Activated CD4-positive, alpha-beta T cell treated with anti-CD3 and anti-CD28 coated beads for 36 hours (primary cell): ENCODE measurements at regions of chr11 and their contacts with region 1.

Region 1: DNA sequence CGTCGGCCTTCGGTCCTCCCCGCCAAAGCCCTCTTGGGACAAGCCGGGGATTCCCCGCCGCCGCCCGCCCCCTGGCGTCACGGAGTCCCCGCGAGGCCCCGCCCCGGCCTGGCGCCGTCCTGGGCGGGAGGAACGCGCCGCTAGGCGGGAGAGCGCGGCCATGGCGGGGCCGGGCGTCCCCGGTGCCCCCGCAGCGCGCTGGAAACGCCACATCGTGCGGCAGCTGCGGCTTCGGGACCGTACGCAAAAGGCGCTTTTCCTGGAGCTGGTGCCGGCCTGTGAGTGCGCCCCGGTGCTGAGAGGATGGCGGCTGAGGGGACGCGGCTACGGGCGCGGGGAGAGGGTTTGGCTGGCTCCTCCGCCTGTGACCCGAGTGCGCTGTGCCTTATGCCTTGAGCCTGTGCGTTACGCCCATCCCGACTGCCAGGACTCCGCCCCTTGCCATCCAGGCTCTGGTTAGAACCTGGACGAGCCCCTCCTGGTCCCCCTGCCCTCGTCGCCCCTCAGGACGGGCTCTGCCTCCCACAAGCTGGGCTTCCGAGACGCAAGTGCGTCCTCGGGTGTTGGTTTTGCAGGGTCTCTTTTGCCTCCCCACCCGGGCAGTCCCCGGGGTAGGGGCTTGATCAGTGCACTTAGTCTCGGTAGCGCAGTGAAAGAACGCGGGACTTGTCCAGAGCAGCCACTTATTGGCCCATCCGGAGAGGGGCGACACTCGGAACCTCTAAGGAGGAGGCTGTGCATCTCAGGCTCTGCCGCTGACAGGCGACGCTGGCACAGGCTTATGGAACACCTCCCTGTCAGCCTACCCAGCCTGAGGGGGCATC is at the start of gene ATG16L2:
- DNase-seq: peak; percentile 94
- ATAC-seq: peak; percentile 65
- H3K4me3 Mint-ChIP-seq: peak within 1 kb of the TSS; percentile 91
- H3K27ac Mint-ChIP-seq: peak within 1 kb of the TSS; percentile 98
- H3K4me1 Mint-ChIP-seq: peaks cover 30% of the 10 kb centered on the region
- H3K27me3 Mint-ChIP-seq: no peaks in the 10 kb centered on the region
- total RNA-seq, gene ATG16L2: 55.3 to 59.4 TPM

Region 2: DNA sequence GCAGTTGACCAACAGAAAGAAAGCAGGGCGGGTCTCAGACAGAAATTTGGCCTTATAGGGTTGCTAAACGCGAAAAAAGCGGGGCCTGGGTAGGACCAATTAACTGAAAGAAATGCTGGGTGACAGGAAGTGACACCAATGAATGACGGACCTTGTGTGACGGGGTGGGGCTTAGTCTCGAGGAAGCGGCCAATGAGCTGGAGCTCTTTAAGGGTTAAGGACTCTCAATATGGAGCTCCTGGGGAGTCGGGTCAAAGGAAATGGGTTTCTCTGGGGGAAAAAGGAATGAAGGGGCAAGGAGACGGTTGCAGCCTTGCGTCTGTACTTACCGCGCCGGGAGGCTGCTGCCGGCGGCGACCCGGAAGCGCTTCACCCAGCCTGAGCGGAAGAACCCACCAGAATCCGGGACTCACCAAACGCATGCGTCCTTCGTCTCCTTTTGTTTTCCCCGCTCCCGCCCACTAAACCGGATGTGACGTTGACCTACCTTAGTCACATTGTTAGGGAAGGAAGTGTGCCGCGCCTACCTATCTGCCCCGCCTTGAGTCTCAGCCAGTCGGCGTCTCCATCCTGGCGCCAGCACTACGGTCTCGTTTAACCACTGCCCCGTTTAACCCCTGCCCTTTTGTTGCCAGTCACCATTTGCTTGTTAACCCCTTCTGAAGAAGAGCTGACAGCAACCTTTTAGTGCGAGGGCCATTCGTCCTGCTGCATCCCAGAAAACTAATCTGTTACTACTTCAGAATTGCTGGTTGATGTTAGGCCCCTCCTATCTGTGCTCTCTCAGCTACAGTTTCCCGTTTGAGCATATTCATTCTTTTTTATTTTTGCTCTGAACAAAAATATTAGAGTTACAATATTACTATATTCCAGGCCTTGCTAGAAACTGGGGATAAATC is 701.9 kb before region 1 on chr11 and contains the start of gene ANAPC15:
- CTCF ChIA-PET with region 1: no interaction called
- POLR2A ChIA-PET with region 1: no interaction called
- intact Hi-C with region 1: loop called in 1 of 2 experiments (anchors 1 kb)
- DNase-seq: peak; percentile 100
- ATAC-seq: peak; percentile 89
- H3K4me3 Mint-ChIP-seq: peak within 1 kb of the TSS; percentile 92
- H3K27ac Mint-ChIP-seq: peak within 1 kb of the TSS; percentile 98
- H3K4me1 Mint-ChIP-seq: peaks cover 16% of the 10 kb centered on the region
- H3K27me3 Mint-ChIP-seq: no peaks in the 10 kb centered on the region
- total RNA-seq, gene ANAPC15: 60.3 to 76.1 TPM

Region 3: DNA sequence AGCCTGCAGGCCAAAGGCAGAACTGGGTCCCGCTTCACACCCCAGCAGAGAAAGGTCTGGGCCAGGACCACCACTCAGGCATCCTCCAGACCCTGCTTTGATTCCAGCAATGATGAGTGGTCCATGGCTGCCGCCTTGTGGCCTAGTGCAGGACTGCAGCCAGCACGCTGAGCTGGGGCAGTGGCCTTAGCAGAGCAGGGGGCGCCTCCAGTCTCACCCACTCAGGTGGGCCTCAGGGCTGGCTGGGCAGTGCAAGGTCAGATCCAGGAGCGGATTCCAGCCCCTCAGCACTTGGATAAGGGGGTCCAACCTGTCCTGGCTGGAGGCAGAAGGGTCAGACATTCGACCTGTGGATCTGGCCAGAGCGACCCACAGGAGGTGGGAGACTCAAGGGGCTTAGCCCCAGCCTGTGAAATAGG is 130.7 kb before region 1 on chr11:
- CTCF ChIA-PET with region 1: interaction called, 5 read pairs
- POLR2A ChIA-PET with region 1: no interaction called
- intact Hi-C with region 1: loop called in 1 of 2 experiments (anchors 1 kb)
- DNase-seq: peak; percentile 83
- ATAC-seq: peak; percentile 60
- H3K4me3 Mint-ChIP-seq: no peak overlapping the region
- H3K27ac Mint-ChIP-seq: no peak overlapping the region
- H3K4me1 Mint-ChIP-seq: peaks cover 15% of the 10 kb centered on the region
- H3K27me3 Mint-ChIP-seq: no peaks in the 10 kb centered on the region

Region 4: DNA sequence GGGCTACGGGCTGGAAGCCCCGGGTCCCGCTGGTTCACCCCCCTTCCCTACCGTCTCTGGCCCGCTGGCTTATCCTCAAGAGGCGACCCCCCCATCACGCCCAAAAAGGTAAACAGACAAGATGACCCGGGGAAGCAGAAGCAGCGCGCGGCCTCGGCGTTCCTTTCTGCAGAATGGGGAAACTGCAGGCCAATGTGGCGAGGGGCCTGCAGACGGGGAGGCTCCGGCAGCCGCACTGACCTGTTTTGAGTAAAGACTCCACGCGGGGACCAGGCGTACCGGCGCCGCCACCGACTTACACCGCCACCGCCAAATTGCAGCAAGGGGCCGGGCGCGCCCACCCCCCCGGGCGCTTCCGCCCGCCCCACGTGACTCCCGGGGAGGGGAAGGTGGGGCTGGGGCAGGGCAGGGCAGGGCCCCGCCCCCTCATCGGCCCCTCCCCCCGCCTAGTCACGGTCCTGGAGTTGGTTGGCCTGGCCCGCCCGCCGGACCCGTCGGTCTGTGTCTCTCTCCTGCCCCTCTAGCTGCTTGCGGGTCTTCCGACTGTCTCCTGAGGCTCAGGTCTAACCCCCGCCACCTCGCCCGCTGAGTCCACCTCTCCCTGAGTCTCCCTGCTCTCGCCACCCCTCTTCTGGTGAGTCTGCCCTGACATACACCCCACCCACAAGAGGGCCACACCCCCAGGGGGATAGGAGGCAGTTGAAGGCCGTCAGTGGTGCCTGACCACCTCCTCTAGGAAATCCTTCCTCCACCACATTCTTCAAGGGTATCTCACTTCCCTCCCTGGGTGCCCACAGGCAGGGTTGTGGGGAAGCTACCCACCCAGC is 62.2 kb before region 1 on chr11 and contains the start of gene ARAP1:
- CTCF ChIA-PET with region 1: interaction called, 5 read pairs
- POLR2A ChIA-PET with region 1: no interaction called
- intact Hi-C with region 1: loop called in 1 of 2 experiments (anchors 1 kb)
- DNase-seq: peak; percentile 86
- ATAC-seq: peak; percentile 83
- H3K4me3 Mint-ChIP-seq: peak within 1 kb of the TSS; percentile 95
- H3K27ac Mint-ChIP-seq: peak within 1 kb of the TSS; percentile 92
- H3K4me1 Mint-ChIP-seq: peaks cover 39% of the 10 kb centered on the region
- H3K27me3 Mint-ChIP-seq: no peaks in the 10 kb centered on the region
- total RNA-seq, gene ARAP1: 69.9 to 76.6 TPM

Region 5: GRCh38 chr11:72848846-72849466 is 34.5 kb after region 1 on chr11:
- CTCF ChIA-PET with region 1: no interaction called
- POLR2A ChIA-PET with region 1: no interaction called
- intact Hi-C with region 1: no loop called
- DNase-seq: peak; percentile 62
- ATAC-seq: peak; percentile 71
- H3K4me3 Mint-ChIP-seq: no peak overlapping the region
- H3K27ac Mint-ChIP-seq: no peak overlapping the region
- H3K4me1 Mint-ChIP-seq: peaks cover 3% of the 10 kb centered on the region
- H3K27me3 Mint-ChIP-seq: no peaks in the 10 kb centered on the region

Region 6: GRCh38 chr11:72935700-72936099 is 121.2 kb after region 1 on chr11:
- CTCF ChIA-PET with region 1: no interaction called
- POLR2A ChIA-PET with region 1: no interaction called
- intact Hi-C with region 1: no loop called
- DNase-seq: no peak
- ATAC-seq: no peak
- H3K4me3 Mint-ChIP-seq: no peak overlapping the region
- H3K27ac Mint-ChIP-seq: no peak overlapping the region
- H3K4me1 Mint-ChIP-seq: no peaks in the 10 kb centered on the region
- H3K27me3 Mint-ChIP-seq: no peaks in the 10 kb centered on the region

Region 7: GRCh38 chr11:72969894-72970335 is 155.4 kb after region 1 on chr11:
- CTCF ChIA-PET with region 1: no interaction called
- POLR2A ChIA-PET with region 1: no interaction called
- intact Hi-C with region 1: loop called in 1 of 2 experiments (anchors 2 kb)
- DNase-seq: peak; percentile 3
- ATAC-seq: peak; percentile 87
- H3K4me3 Mint-ChIP-seq: no peak overlapping the region
- H3K27ac Mint-ChIP-seq: peak overlapping the region; percentile 79
- H3K4me1 Mint-ChIP-seq: peaks cover 34% of the 10 kb centered on the region
- H3K27me3 Mint-ChIP-seq: no peaks in the 10 kb centered on the region

Region 8: DNA sequence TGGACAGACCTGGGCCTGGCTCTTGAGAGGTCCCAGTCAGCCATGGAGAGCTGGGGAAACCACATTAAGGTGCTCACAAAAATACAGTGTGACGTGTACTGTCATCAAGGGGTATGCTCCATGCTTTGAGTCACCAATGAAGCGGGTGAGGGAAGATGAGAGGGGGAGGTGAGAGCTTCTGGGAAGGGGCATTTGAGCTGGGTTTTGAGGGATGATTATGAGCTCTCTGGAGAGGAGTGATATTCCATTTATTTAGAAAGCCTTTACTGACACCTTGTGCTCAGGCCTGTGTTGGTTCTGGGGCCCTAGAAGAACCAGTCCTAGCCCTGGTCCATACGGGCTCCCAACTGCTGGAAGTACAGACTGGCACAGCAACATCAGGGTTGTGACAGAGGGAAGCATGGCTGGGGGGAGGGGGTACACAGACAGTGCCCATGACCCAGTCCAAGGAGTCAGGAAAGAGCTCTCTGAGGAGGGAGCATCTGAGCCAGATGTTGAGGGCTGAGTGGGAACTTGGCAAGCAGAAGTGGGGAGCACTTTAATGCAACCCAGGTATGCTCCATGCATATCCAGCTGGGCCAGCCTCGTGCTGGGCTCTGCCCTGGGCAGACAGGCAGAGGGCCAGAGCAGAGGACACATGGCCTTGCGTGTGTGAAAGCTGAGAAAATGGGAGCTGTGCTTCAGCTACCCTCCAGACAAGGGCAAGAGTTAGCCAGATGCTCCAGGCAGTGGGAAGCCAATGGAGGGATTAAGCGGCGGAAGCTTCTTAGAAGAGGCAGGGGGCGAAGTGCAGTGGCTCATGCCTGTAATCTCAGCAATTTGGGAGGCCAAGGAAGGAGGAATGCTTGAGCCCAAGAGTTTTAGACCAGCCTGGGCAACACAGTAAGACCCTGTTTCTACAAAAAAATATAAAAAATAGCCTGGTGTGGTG is 483.5 kb after region 1 on chr11:
- CTCF ChIA-PET with region 1: no interaction called
- POLR2A ChIA-PET with region 1: no interaction called
- intact Hi-C with region 1: no loop called
- DNase-seq: no peak
- ATAC-seq: no peak
- H3K4me3 Mint-ChIP-seq: no peak overlapping the region
- H3K27ac Mint-ChIP-seq: no peak overlapping the region
- H3K4me1 Mint-ChIP-seq: peaks cover 2% of the 10 kb centered on the region
- H3K27me3 Mint-ChIP-seq: peaks cover 4% of the 10 kb centered on the region

Region 9: GRCh38 chr11:73760679-73761402 is 946.3 kb after region 1 on chr11 and contains the start of gene RAB6A:
- CTCF ChIA-PET with region 1: no interaction called
- POLR2A ChIA-PET with region 1: no interaction called
- intact Hi-C with region 1: loop called in 1 of 2 experiments (anchors 2 kb)
- DNase-seq: peak; percentile 100
- ATAC-seq: peak; percentile 93
- H3K4me3 Mint-ChIP-seq: peak within 1 kb of the TSS; percentile 97
- H3K27ac Mint-ChIP-seq: peak within 1 kb of the TSS; percentile 86
- H3K4me1 Mint-ChIP-seq: peaks cover 22% of the 10 kb centered on the region
- H3K27me3 Mint-ChIP-seq: no peaks in the 10 kb centered on the region
- total RNA-seq, gene RAB6A: 57.9 to 58.9 TPM